Natural killer cell (primary cell): ENCODE measurements at regions of chr5 and their contacts with region 1.

Region 1: DNA sequence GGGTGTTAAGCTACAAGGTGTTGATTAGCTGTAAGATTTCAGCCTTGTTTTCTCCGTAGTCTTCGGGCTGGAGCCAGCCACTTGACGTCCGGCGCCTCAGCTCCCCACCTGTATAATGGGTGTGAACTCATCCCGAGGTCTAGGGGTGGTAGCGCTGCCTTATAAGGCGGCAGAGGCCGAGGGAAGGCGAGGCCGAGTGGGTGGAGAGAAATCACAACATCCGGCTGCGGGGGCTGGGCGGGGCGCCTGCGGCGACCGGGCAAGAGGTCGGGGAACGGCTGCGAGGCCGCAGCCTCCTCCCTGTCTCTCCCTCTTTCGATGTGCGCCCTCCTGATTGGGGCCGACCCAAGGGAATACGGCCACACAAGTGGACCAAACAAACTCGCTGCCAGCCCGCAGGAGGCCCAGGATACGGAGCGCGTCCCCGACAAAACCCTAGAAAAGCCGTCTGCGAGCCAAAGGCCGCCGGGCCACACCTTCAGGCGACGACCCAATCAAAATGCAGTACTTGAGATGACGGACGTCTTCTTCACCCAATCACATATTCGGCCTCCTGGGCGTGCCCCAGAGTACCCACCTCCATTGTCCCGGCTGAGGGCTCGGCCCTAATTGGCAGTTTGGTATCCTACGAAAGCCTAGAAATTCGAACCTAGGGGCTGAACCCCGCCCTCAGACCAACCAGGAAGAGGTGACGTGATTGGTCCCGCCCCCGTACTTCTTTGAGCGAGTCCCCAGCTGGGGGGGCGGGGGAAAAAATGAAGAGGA is 493 bp upstream of the GRK6 start:
- DNase-seq: peak; percentile 98 to 100
- ATAC-seq: peak; percentile 75 to 93 (median 80)
- H3K4me3 ChIP-seq: peak overlapping the region; percentile 58
- H3K4me3 Mint-ChIP-seq: peak overlapping the region; percentile 98
- H3K27ac ChIP-seq: peak overlapping the region; percentile 92
- H3K27ac Mint-ChIP-seq: peak overlapping the region; percentile 94 to 99
- H3K4me1 ChIP-seq: peaks cover 52% of the 10 kb centered on the region
- H3K4me1 Mint-ChIP-seq: peaks cover 54 to 64% of the 10 kb centered on the region in 2 donors
- H3K27me3 ChIP-seq: no peaks in the 10 kb centered on the region
- H3K27me3 Mint-ChIP-seq: no peaks in the 10 kb centered on the region
- CTCF ChIP-seq: no peak

Region 2: GRCh38 chr5:177351385-177352329 is 74.3 kb before region 1 on chr5 and contains the start of gene LMAN2:
- intact Hi-C with region 1: loop called (anchors 2 kb)
- DNase-seq: peak; percentile 86 to 96
- ATAC-seq: peak; percentile 97 to 99 (median 97)
- H3K4me3 ChIP-seq: peak within 1 kb of the TSS; percentile 96
- H3K4me3 Mint-ChIP-seq: peak within 1 kb of the TSS; percentile 97
- H3K27ac ChIP-seq: peak within 1 kb of the TSS; percentile 91
- H3K27ac Mint-ChIP-seq: peak within 1 kb of the TSS; percentile 98 to 99
- H3K4me1 ChIP-seq: peaks cover 48% of the 10 kb centered on the region
- H3K4me1 Mint-ChIP-seq: peaks cover 58 to 63% of the 10 kb centered on the region in 2 donors
- H3K27me3 ChIP-seq: no peaks in the 10 kb centered on the region
- H3K27me3 Mint-ChIP-seq: no peaks in the 10 kb centered on the region
- CTCF ChIP-seq: no peak
- total RNA-seq, gene LMAN2: 112 to 124 (median 114) TPM

Region 3: GRCh38 chr5:177403792-177404640 is 22.0 kb before region 1 on chr5:
- intact Hi-C with region 1: loop called (anchors 1 kb)
- DNase-seq: peak; percentile 81 to 94
- ATAC-seq: peak; percentile 80 to 91 (median 81)
- H3K4me3 ChIP-seq: peak overlapping the region; percentile 36
- H3K4me3 Mint-ChIP-seq: peak overlapping the region; percentile 72
- H3K27ac ChIP-seq: peak overlapping the region; percentile 51
- H3K27ac Mint-ChIP-seq: peak overlapping the region; percentile 62 to 84
- H3K4me1 ChIP-seq: peaks cover 51% of the 10 kb centered on the region
- H3K4me1 Mint-ChIP-seq: peaks cover 37 to 45% of the 10 kb centered on the region in 2 donors
- H3K27me3 ChIP-seq: peaks cover 22% of the 10 kb centered on the region
- H3K27me3 Mint-ChIP-seq: peaks cover 13 to 17% of the 10 kb centered on the region in 2 donors
- CTCF ChIP-seq: peak; percentile 66

Region 4: DNA sequence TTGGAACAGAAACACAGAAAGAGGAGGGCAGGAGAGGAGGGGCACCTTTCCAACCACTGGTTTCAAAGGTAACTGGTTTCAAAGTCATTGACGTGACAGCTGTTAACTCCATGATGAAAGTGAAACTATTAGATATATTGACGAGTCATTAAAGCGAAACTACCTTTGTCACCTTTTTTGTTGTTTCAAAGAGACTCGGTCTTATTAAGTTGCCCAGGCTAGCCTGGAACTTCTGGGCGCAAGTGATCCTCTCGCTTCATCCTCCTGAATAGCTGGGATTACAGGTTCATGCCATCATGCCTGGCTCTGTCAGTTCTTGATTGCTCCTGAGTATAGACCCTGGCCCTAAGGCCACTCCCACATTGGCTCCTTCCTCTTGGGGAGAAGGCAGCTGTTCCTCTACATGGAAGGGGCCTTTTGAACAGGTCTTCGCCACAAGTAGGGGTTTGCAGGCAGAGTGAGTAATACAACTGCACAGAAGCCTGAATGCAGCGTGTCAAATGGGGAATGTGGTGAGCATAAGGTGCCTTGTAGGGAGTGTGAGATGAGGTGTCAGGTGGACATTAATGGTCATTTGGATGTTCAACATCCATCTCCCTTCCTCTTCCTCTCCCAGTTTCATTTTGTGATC is 13.3 kb before region 1 on chr5:
- intact Hi-C with region 1: loop called (anchors 1 kb)
- DNase-seq: peak; percentile 17 to 77
- ATAC-seq: peak; percentile 61 to 69 (median 68)
- H3K4me3 ChIP-seq: no peak overlapping the region
- H3K4me3 Mint-ChIP-seq: peak overlapping the region; percentile 65
- H3K27ac ChIP-seq: peak overlapping the region; percentile 0
- H3K27ac Mint-ChIP-seq: peak overlapping the region; percentile 78 to 80
- H3K4me1 ChIP-seq: peaks cover 43% of the 10 kb centered on the region
- H3K4me1 Mint-ChIP-seq: peaks cover 36 to 48% of the 10 kb centered on the region in 2 donors
- H3K27me3 ChIP-seq: no peaks in the 10 kb centered on the region
- H3K27me3 Mint-ChIP-seq: no peaks in the 10 kb centered on the region
- CTCF ChIP-seq: no peak

Region 5: GRCh38 chr5:177446200-177447065 is 20.4 kb after region 1 on chr5 and contains the start of gene PRR7:
- intact Hi-C with region 1: loop called (anchors 1 kb)
- DNase-seq: peak; percentile 80 to 92
- ATAC-seq: peak; percentile 62 to 87 (median 71)
- H3K4me3 ChIP-seq: peak within 1 kb of the TSS; percentile 42
- H3K4me3 Mint-ChIP-seq: peak within 1 kb of the TSS; percentile 75
- H3K27ac ChIP-seq: peak within 1 kb of the TSS; percentile 78
- H3K27ac Mint-ChIP-seq: peak within 1 kb of the TSS; percentile 79 to 84
- H3K4me1 ChIP-seq: peaks cover 47% of the 10 kb centered on the region
- H3K4me1 Mint-ChIP-seq: peaks cover 27 to 51% of the 10 kb centered on the region in 2 donors
- H3K27me3 ChIP-seq: no peaks in the 10 kb centered on the region
- H3K27me3 Mint-ChIP-seq: no peaks in the 10 kb centered on the region
- CTCF ChIP-seq: no peak
- total RNA-seq, gene PRR7: 21.6 to 27.9 (median 23.3) TPM